CD14-positive monocyte (primary cell): ENCODE measurements at regions of chr10 and their contacts with region 1.

Region 1: DNA sequence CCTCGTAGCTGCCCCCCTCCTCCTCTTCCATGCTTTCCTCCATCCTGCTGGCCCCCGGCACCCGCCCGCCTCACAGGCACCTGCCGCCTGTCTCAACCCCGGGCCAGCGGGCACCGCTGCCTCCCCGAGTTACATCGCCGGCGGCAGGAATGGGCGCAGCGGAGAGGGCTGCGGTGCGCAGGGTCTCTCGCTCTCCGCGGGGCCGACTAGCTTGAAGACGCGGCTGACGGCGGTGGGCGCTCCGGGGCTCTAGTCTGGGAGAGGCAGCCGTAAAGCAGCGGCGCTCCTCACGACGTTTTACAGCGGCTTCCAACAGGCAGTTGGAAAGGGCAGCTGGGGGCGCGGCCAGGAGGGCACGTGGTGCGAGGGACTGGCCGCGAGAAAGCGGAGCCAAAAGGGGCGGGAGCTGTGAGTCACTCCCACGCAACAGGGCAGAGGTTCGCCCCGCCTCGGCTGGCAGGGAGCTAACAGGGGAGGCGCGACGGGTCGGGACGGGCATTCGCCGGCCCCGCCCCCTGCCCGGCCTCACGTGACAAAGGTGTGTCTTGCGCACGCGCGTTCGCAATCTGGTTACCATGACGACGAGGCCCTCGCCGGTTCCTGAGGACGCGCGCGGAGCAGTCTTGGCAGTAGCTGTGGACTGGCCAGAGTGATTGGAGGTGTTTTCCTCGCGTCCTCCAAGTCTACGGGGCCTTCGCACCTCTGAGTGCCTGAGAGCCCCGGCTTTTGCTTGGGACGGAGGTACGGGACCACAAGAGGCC is at the start of gene CACUL1:
- DNase-seq: peak; percentile 100
- H3K4me3 ChIP-seq: peak within 1 kb of the TSS; percentile 74 to 98 (median 89)
- H3K4me3 Mint-ChIP-seq: peak within 1 kb of the TSS; percentile 99
- H3K27ac ChIP-seq: peak within 1 kb of the TSS; percentile 64 to 89
- H3K27ac Mint-ChIP-seq: peak within 1 kb of the TSS; percentile 88 to 97 (median 95)
- H3K4me1 ChIP-seq: peaks cover 19 to 33% of the 10 kb centered on the region in 2 donors
- H3K4me1 Mint-ChIP-seq: peaks cover 34% of the 10 kb centered on the region
- H3K27me3 ChIP-seq: peaks cover 2 to 15% of the 10 kb centered on the region in 2 donors
- H3K27me3 Mint-ChIP-seq: peaks cover 9 to 17% (median 17%) of the 10 kb centered on the region in 3 donors
- CTCF ChIP-seq: no peak
- polyA plus RNA-seq, gene CACUL1: 18.1 to 50.8 (median 38.8) TPM

Region 2: DNA sequence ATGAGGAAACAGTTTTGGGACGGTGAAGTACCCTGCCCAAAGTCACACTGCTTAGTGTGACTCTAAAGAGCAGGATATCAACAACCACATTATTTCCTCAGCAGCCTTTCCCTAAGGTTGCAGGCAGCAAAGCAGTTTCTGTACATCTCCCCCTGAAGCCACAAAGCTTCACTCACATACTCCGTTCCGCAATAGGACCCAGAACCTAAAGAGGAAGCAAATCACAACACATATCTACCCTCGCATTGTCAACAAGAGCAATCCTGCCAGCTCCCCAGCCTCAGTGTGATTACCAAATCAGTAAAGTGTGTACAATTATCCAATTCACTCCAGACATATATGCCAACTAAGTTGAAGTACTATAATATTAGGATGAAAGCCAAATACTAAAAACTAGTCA is 1647.7 kb before region 1 on chr10:
- intact Hi-C with region 1: no loop called
- DNase-seq: peak in 1 of 3 donors; percentile 8
- H3K4me3 ChIP-seq: no peak overlapping the region
- H3K4me3 Mint-ChIP-seq: no peak overlapping the region
- H3K27ac ChIP-seq: no peak overlapping the region
- H3K27ac Mint-ChIP-seq: no peak overlapping the region
- H3K4me1 ChIP-seq: no peaks in the 10 kb centered on the region
- H3K4me1 Mint-ChIP-seq: peaks cover 4% of the 10 kb centered on the region
- H3K27me3 ChIP-seq: peaks cover 1 to 6% of the 10 kb centered on the region in 2 donors
- H3K27me3 Mint-ChIP-seq: peaks cover 10 to 21% (median 19%) of the 10 kb centered on the region in 3 donors
- CTCF ChIP-seq: no peak

Region 3: DNA sequence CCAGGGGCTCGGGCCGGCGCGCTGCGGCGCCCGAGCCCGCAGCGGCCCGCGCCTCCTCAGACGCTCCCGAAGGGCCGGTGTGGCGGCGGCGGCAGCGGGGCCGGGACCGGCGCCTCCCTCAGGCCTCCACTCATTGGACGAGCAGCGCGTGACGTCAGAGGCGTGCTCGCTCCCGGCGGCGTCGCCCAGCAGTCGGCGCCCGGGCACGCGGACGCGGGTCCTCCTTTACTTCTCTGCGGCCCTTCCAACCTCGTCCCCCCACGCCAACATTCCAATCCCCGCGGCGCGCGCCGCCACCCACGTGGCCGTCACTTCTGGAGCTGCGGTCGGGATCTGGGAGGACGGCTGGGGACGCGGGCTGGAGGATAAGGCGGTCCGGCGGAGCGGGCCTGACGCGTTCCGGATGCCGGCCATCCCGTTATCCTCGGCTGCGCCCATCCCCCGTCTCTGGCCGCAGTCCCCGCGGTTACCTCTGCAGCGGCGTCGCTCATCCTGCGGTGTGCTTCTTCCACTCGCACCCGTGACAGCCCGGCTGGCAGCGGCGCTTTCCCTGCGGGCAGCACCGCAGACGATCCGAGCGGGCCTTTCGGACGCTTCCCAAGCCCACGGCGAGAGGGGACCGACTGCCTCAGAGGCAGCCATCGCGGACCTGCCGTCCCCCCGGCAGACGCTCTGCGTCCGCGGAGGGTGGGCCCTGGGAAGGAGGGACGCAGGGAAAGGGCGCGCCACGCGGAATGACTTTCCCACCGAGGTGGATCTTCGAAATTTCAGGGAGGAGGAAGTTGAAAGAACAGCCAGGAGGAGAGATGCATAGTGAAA is 1379.3 kb before region 1 on chr10 and contains the start of gene PDZD8:
- intact Hi-C with region 1: loop called in 1 of 2 experiments (anchors 10 kb)
- DNase-seq: peak; percentile 90 to 94 (median 92)
- H3K4me3 ChIP-seq: peak within 1 kb of the TSS; percentile 85 to 93 (median 92)
- H3K4me3 Mint-ChIP-seq: peak within 1 kb of the TSS; percentile 97
- H3K27ac ChIP-seq: peak within 1 kb of the TSS; percentile 68 to 88
- H3K27ac Mint-ChIP-seq: peak within 1 kb of the TSS; percentile 85 to 93 (median 90)
- H3K4me1 ChIP-seq: peaks cover 33 to 52% of the 10 kb centered on the region in 2 donors
- H3K4me1 Mint-ChIP-seq: peaks cover 39% of the 10 kb centered on the region
- H3K27me3 ChIP-seq: no peaks in the 10 kb centered on the region
- H3K27me3 Mint-ChIP-seq: peaks cover 5 to 10% (median 8%) of the 10 kb centered on the region in 3 donors
- CTCF ChIP-seq: no peak
- polyA plus RNA-seq, gene PDZD8: 4.6 to 104 (median 9.0) TPM

Region 4: GRCh38 chr10:118035354-118036005 is 719.4 kb before region 1 on chr10:
- intact Hi-C with region 1: loop called in 1 of 2 experiments (anchors 10 kb)
- DNase-seq: peak; percentile 9 to 37 (median 34)
- H3K4me3 ChIP-seq: peak overlapping the region in 2 of 3 experiments; percentile 32 to 59
- H3K4me3 Mint-ChIP-seq: peak overlapping the region; percentile 54 to 75
- H3K27ac ChIP-seq: peak overlapping the region in 1 of 2 donors; percentile 71
- H3K27ac Mint-ChIP-seq: peak overlapping the region in 6 of 7 donors; percentile 40 to 77 (median 66)
- H3K4me1 ChIP-seq: peaks cover 21 to 25% of the 10 kb centered on the region in 2 donors
- H3K4me1 Mint-ChIP-seq: peaks cover 29% of the 10 kb centered on the region
- H3K27me3 ChIP-seq: no peaks in the 10 kb centered on the region
- H3K27me3 Mint-ChIP-seq: no peaks in the 10 kb centered on the region
- CTCF ChIP-seq: no peak

Region 5: DNA sequence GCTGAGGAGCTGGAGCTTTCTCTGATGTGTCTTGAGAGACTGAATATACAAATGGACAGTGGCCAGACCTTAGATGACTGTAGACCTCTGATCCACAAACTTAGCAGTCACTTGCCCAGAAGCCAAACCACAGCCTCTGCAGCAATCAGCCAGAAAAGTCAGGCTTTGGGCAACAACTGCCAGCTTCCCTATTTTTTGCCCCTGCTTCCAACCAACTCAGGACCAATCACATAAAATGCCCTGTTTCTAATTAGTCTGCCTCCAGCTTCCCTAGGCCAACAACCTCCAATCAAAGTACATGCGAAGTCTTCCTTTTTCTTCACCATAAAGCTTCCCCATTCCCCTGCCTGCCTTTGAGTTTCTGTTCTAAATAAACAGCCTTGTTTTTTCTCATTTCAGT is 37.6 kb after region 1 on chr10:
- intact Hi-C with region 1: loop called (anchors 2 to 5 kb)
- DNase-seq: peak; percentile 91 to 94 (median 91)
- H3K4me3 ChIP-seq: peak overlapping the region in 1 of 3 experiments; percentile 40
- H3K4me3 Mint-ChIP-seq: peak overlapping the region; percentile 44 to 73
- H3K27ac ChIP-seq: peak overlapping the region; percentile 81 to 90
- H3K27ac Mint-ChIP-seq: peak overlapping the region; percentile 94 to 97 (median 96)
- H3K4me1 ChIP-seq: peaks cover 24 to 27% of the 10 kb centered on the region in 2 donors
- H3K4me1 Mint-ChIP-seq: peaks cover 29% of the 10 kb centered on the region
- H3K27me3 ChIP-seq: no peaks in the 10 kb centered on the region
- H3K27me3 Mint-ChIP-seq: peaks cover 6 to 9% (median 9%) of the 10 kb centered on the region in 3 donors
- CTCF ChIP-seq: no peak

Region 6: GRCh38 chr10:119207367-119207668 is 452.4 kb after region 1 on chr10 and contains the start of gene GRK5:
- intact Hi-C with region 1: loop called in 1 of 2 experiments (anchors 10 kb)
- DNase-seq: peak; percentile 91 to 93 (median 92)
- H3K4me3 ChIP-seq: peak within 1 kb of the TSS; percentile 48 to 85 (median 80)
- H3K4me3 Mint-ChIP-seq: peak within 1 kb of the TSS; percentile 96 to 97
- H3K27ac ChIP-seq: peak within 1 kb of the TSS; percentile 73 to 86
- H3K27ac Mint-ChIP-seq: peak within 1 kb of the TSS; percentile 90 to 98 (median 97)
- H3K4me1 ChIP-seq: peaks cover 33 to 44% of the 10 kb centered on the region in 2 donors
- H3K4me1 Mint-ChIP-seq: peaks cover 41% of the 10 kb centered on the region
- H3K27me3 ChIP-seq: no peaks in the 10 kb centered on the region
- H3K27me3 Mint-ChIP-seq: peaks cover 3 to 16% (median 16%) of the 10 kb centered on the region in 3 donors
- CTCF ChIP-seq: no peak
- polyA plus RNA-seq, gene GRK5: 1.2 to 6.5 (median 2.8) TPM

Region 7: GRCh38 chr10:119401671-119402395 is 646.9 kb after region 1 on chr10:
- intact Hi-C with region 1: loop called in 1 of 2 experiments (anchors 10 kb)
- DNase-seq: peak; percentile 77 to 93 (median 84)
- H3K4me3 ChIP-seq: no peak overlapping the region
- H3K4me3 Mint-ChIP-seq: no peak overlapping the region
- H3K27ac ChIP-seq: peak overlapping the region; percentile 3 to 63
- H3K27ac Mint-ChIP-seq: peak overlapping the region; percentile 73 to 86 (median 80)
- H3K4me1 ChIP-seq: peaks cover 64 to 68% of the 10 kb centered on the region in 2 donors
- H3K4me1 Mint-ChIP-seq: peaks cover 64% of the 10 kb centered on the region
- H3K27me3 ChIP-seq: no peaks in the 10 kb centered on the region
- H3K27me3 Mint-ChIP-seq: peaks cover 0 to 3% (median 1%) of the 10 kb centered on the region in 3 donors
- CTCF ChIP-seq: no peak